MCF 10A (cell line): ENCODE measurements at regions of chr2 and their contacts with region 1.

Region 1: DNA sequence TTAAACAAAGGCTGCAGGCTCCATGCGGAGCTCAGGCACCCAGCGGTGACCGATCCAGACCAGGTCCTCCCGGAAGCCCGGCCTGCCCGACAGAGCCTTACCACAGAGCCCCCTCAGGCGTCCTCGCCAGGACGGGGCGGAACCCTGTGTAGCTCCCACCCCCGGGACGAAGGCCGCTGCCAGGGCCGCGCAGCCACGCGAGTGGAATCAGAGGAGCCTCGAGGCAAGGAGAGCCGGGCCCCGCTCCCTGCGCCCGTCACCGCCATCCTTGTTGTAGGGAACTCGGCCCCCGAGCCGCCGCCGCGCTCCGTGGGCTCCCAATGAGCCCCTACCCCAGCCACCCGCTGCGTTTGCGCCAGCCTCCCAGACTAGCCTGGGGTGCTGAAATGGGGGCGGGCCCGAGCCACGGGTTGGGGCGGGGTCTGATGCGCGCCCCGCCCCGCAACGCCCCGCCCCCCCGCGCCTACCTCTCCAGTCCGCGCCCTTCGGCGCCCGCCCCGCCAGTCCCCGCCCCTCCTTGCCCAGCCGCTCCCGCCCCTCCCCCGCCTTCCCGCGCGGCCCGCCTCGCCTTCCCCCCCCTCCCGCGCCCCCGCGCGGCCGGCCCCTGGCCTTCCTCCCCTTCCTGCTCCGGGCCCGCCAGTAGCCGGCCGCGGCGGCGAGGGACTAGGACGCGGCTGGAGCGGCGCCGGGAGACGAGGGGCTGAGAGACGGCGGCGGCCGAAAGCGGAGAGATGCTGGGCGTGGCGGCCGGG is at the start of gene LIMS1:
- DNase-seq: peak; percentile 90
- H3K4me3 Mint-ChIP-seq: peak within 1 kb of the TSS; percentile 90
- H3K27ac Mint-ChIP-seq: peak within 1 kb of the TSS; percentile 83
- H3K4me1 Mint-ChIP-seq: peaks cover 34% of the 10 kb centered on the region
- H3K27me3 Mint-ChIP-seq: no peaks in the 10 kb centered on the region
- CTCF ChIP-seq: no peak
- total RNA-seq, gene LIMS1: 70.9 and 74.9 TPM in 2 replicates

Region 2: DNA sequence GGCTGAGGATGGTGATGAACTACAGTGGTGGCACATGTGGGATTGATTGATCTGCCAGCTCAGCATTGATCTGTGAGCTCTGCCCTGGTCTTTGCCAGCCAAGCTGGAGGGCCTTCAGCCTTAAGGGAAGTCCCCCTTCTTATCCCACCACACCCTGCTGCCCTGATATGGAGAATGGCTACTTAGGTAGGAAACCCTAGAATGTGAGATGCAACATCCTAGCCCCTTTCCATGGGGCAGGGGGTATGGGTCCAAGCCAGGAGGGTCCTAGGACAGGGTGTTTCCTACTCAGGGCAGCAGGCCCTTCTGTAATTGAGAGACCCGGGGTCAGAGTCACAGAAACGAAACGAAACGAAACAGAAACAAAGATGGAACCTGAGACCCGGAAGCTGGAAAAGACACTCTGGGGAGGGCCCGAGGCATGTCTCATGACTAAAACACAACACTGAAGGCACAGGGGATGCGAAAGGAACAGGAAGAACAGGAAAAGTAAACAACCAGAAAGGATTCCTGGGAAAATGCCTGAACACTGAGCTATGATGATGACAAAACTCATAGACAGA is 262.2 kb before region 1 on chr2:
- CTCF ChIA-PET with region 1: no interaction called
- POLR2A ChIA-PET with region 1: no interaction called
- intact Hi-C with region 1: no loop called
- DNase-seq: peak; percentile 13
- H3K4me3 Mint-ChIP-seq: no peak overlapping the region
- H3K27ac Mint-ChIP-seq: no peak overlapping the region
- H3K4me1 Mint-ChIP-seq: peaks cover 12% of the 10 kb centered on the region
- H3K27me3 Mint-ChIP-seq: no peaks in the 10 kb centered on the region
- CTCF ChIP-seq: no peak

Region 3: GRCh38 chr2:108492364-108492763 is 41.6 kb before region 1 on chr2:
- CTCF ChIA-PET with region 1: interaction called, 3 read pairs
- POLR2A ChIA-PET with region 1: interaction called, 32 read pairs
- intact Hi-C with region 1: loop called (anchors 2 kb)
- DNase-seq: peak; percentile 90
- H3K4me3 Mint-ChIP-seq: peak overlapping the region; percentile 6
- H3K27ac Mint-ChIP-seq: no peak overlapping the region
- H3K4me1 Mint-ChIP-seq: peaks cover 11% of the 10 kb centered on the region
- H3K27me3 Mint-ChIP-seq: no peaks in the 10 kb centered on the region
- CTCF ChIP-seq: no peak

Region 4: GRCh38 chr2:108548208-108549003 is 14.4 kb after region 1 on chr2:
- CTCF ChIA-PET with region 1: interaction called, 7 read pairs
- POLR2A ChIA-PET with region 1: interaction called, 11 read pairs
- intact Hi-C with region 1: no loop called
- DNase-seq: no peak
- H3K4me3 Mint-ChIP-seq: no peak overlapping the region
- H3K27ac Mint-ChIP-seq: no peak overlapping the region
- H3K4me1 Mint-ChIP-seq: peaks cover 20% of the 10 kb centered on the region
- H3K27me3 Mint-ChIP-seq: no peaks in the 10 kb centered on the region
- CTCF ChIP-seq: no peak

Region 5: GRCh38 chr2:108575132-108575966 is 41.3 kb after region 1 on chr2:
- CTCF ChIA-PET with region 1: interaction called, 29 read pairs
- POLR2A ChIA-PET with region 1: interaction called, 263 read pairs
- intact Hi-C with region 1: loop called (anchors 1 kb)
- DNase-seq: peak; percentile 59
- H3K4me3 Mint-ChIP-seq: peak overlapping the region; percentile 3
- H3K27ac Mint-ChIP-seq: peak overlapping the region; percentile 65
- H3K4me1 Mint-ChIP-seq: peaks cover 60% of the 10 kb centered on the region
- H3K27me3 Mint-ChIP-seq: no peaks in the 10 kb centered on the region
- CTCF ChIP-seq: no peak